Aorta (tissue), 5 donors: ENCODE measurements at regions of chr9 and their contacts with region 1.

Region 1: DNA sequence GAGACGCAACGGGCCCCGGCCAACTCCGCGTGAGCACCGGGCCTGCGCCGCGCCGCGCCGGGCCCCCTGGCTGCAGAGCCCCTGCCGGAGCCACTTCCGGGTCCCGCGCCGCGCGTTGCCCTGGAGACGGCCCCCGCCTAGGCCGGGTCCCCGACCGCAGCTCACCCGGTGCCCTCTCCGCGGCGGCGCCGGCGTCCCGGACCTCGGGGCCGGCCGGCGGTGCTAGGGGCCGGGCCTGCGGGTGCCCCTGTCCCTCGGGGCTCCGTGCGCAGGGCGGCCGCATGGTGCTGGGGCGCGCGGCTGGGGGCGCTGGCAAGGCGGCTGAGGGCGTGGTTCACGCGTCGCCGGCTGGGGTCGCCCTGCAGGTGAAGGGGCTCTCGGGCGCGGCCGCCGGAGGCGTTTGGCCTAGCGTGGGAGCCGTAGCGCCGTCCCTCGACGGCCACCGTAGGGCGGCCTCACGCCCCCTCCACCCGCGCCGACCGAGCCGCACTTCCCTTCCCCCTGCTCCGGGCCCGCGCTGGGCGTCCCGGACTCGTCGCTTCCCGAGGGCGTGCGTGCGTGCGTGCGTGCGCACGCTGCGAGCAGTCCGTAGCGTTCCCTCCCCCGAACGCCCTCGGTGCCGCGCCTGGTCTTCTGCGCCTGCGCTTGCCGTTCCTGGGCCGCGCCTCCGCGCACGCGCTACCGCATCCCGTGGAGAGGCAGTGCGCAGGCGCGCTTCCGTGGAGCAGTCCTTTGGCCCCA is at the start of gene TMEM250:
- DNase-seq: peak; percentile 98 to 99
- ATAC-seq: peak; percentile 96
- H3K4me3 ChIP-seq: peak within 1 kb of the TSS; percentile 81 to 89
- H3K27ac ChIP-seq: peak within 1 kb of the TSS in 1 of 2 donors; percentile 20
- H3K4me1 ChIP-seq: no peaks in the 10 kb centered on the region
- H3K27me3 ChIP-seq: no peaks in the 10 kb centered on the region
- total RNA-seq, gene TMEM250: 22.0 to 25.1 TPM

Region 2: DNA sequence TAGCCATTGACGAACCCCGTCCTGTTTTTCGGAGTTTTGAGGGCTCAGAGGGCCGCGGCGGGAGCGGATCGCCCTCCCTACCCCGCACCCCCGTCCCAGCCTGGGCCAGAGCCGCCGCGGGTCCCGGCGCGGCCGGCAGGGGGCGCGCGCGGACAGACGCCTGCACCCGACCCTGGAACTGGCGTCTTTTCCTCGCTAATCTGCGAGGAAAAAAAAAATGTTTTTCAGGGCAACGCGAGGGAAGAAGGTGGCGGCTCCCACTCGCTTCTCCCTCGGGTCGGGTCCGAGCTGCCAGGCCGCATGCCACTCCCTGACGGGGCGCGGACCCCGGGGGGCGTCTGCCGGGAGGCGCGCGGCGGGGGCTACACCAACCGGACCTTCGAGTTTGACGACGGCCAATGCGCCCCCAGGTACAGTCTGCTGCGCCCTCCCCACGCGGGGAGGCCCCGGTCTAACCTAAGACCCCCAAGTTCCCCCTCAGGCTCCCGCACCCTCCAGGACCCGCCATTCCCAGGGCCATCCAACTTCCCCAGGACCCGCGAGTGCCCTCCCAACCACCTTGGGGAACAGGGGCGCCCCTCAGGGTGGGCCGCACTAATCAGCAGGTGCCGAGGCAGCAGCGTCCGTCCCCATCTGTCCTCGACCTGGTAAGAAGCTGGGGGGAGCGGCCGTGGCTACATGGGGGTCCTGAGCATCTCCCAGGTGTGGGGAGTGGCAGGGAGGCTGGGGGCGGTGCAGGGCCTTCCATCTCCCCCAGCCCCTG is 416.4 kb before region 1 on chr9 and contains the start of gene KCNT1:
- intact Hi-C with region 1: loop called in 1 of 2 experiments (anchors 5 kb)
- DNase-seq: peak in 1 of 2 donors; percentile 83
- ATAC-seq: peak; percentile 61
- H3K4me3 ChIP-seq: no peak within 1 kb of the TSS
- H3K27ac ChIP-seq: no peak within 1 kb of the TSS
- H3K4me1 ChIP-seq: no peaks in the 10 kb centered on the region
- H3K27me3 ChIP-seq: no peaks in the 10 kb centered on the region
- total RNA-seq, gene KCNT1: 0.16 to 0.78 TPM

Region 3: DNA sequence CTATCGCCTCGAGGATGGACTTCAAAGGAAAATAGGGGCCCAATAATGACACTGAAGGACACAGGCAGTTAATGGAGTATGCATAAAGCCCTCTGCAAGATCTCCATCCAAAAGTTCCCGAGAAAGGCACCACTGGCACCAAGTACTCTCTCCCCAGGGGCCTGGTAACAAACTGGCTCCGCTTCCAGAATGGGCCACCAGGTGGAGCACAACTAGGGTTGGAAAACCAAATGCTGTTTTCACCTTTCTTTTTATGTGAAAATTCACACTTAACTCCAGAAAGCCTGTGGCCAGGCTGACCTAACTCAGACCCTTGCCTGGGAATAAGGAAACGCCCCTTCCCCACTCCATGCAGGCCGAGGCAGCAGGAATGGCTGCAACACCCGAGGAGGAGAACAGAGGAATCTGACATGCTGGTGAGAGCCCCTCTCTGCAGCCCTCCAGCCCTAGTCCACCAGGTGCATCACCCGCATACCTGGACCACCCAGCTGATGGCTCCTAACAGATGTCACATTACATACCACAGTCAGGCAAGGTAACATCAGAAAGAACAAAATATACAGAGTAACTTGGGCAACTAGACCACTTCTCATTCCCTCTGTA is 253.9 kb before region 1 on chr9:
- intact Hi-C with region 1: loop called (anchors 10 kb)
- DNase-seq: peak; percentile 75 to 91
- ATAC-seq: no peak
- H3K4me3 ChIP-seq: no peak overlapping the region
- H3K27ac ChIP-seq: no peak overlapping the region
- H3K4me1 ChIP-seq: no peaks in the 10 kb centered on the region
- H3K27me3 ChIP-seq: no peaks in the 10 kb centered on the region

Region 4: GRCh38 chr9:135907431-135908092 is 210.9 kb before region 1 on chr9 and contains the start of gene CAMSAP1:
- intact Hi-C with region 1: loop called in 1 of 2 experiments (anchors 5 kb)
- DNase-seq: peak; percentile 95 to 97
- ATAC-seq: peak; percentile 99
- H3K4me3 ChIP-seq: peak within 1 kb of the TSS; percentile 85 to 98
- H3K27ac ChIP-seq: peak within 1 kb of the TSS in 1 of 2 donors; percentile 23
- H3K4me1 ChIP-seq: no peaks in the 10 kb centered on the region
- H3K27me3 ChIP-seq: no peaks in the 10 kb centered on the region
- total RNA-seq, gene CAMSAP1: 26.4 to 28.0 TPM

Region 5: DNA sequence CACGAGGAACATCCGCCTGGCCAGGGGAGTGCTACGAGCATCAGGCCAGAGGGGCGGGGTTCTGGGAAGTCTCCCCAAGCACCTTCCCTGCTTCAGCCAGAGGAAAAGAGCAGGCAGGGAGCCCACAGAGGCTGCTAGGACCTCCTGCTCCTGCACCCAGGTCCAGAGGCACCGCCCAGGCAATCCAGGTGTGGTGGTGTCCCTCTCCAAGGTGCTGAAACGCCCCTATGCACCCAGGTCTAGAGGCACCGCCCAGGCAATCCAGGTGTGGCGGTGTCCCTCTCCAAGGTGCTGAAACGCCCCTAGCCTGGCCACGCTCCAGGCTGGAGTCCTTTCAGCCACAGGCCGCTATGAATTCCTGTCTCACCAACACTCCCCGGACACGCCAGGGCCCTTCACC is 146.6 kb before region 1 on chr9:
- intact Hi-C with region 1: loop called (anchors 1 kb)
- DNase-seq: no peak
- ATAC-seq: no peak
- H3K4me3 ChIP-seq: no peak overlapping the region
- H3K27ac ChIP-seq: no peak overlapping the region
- H3K4me1 ChIP-seq: no peaks in the 10 kb centered on the region
- H3K27me3 ChIP-seq: no peaks in the 10 kb centered on the region

Region 6: GRCh38 chr9:136051517-136052432 is 66.7 kb before region 1 on chr9:
- intact Hi-C with region 1: loop called (anchors 5 to 10 kb)
- DNase-seq: peak; percentile 84 to 92
- ATAC-seq: peak; percentile 76
- H3K4me3 ChIP-seq: peak overlapping the region; percentile 14 to 24
- H3K27ac ChIP-seq: peak overlapping the region in 1 of 2 donors; percentile 22
- H3K4me1 ChIP-seq: peaks cover 0 to 2% of the 10 kb centered on the region in 2 donors
- H3K27me3 ChIP-seq: no peaks in the 10 kb centered on the region

Region 7: DNA sequence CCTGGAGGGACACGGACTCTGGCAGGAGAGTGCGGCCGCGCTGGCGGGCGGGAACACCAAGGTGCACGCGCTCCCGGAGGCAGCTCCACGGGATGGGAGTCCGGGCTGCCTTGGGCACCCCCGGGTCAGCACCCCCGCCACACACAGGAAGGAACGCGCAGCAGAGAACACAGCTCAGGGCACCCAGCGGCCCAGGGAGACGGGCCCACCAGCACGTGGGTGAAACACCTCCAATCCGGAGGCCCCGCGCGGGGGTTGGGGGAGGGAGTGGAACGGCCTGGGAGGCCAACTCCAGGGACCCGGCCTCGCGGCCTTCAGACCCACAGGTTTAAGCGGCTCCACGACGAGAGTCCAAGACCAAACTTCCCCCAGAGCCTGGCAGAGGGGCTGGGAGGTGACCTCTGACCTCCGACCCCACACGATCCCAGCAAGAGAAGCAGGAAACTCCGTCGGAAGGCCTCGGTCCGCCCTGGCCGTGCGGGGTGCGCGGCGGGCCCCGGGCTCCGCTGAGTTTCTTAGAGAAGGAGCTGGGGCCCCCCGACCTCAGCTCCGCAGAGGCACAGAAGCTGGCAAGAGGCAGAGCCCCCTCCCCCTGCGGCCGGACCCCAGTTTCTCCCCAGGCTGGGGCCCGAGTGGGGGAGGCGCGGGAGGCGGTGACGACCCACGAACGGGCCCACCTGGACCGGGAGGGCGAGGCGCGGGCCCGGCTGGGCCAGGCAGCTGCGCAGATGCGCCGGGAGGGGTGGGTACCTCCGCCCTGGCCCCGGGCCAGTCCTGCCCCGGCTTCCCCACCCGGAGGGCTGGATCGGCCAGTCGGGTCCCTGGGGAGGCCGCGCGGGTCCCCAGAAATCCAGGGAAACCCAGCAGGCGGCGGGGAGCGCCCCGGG is 24.3 kb before region 1 on chr9:
- intact Hi-C with region 1: loop called (anchors 1 to 5 kb)
- DNase-seq: peak; percentile 89 to 95
- ATAC-seq: peak; percentile 69
- H3K4me3 ChIP-seq: peak overlapping the region; percentile 86 to 93
- H3K27ac ChIP-seq: peak overlapping the region; percentile 60 to 86
- H3K4me1 ChIP-seq: peaks cover 0 to 2% of the 10 kb centered on the region in 2 donors
- H3K27me3 ChIP-seq: no peaks in the 10 kb centered on the region